ENCODE measurements at regions of chr17 and their contacts with region 1.

Region 1: GRCh38 chr17:59311130-59311920 is 20.1 kb upstream of the YPEL2 start:
- DNase-seq: no peak
- ATAC-seq: peak; percentile 94 to 95

Region 2: DNA sequence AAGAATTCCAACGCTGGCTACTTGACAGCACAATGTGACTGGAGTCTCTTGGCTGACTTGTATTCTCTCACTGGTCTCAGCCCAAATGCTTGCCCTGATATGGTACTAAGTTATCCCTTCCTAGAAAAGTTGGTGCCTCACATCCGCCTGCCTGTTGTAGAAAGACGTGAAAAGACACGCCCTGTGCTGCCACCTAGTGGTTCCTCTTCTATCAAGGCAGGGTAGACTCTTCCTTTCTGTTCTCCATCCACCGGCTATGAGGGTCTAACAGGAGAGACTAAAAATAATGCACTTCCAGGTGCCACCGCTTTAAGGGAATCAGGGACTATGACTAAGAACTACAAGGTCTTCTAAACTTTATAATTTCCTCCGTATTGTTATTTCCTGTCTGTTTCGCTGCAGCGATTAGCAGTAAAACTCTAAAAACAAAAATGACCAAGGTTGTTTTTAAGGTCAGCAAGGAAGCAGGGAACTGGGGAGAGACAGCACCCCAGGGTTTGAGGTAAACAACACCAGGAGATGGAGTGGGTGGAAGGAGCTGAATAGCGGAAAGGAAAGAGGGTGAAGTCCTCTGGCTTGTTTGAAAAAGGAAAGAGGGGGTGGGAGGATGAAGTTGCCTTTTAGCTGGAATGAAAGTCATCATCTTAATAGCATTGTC is 129.6 kb after region 1 on chr17:
- intact Hi-C with region 1: loop called (anchors 1 to 5 kb)
- DNase-seq: peak; percentile 94
- ATAC-seq: peak; percentile 91 to 93

Region 3: GRCh38 chr17:59490216-59490615 is 178.9 kb after region 1 on chr17:
- intact Hi-C with region 1: no loop called
- DNase-seq: no peak
- ATAC-seq: peak in 1 of 2 donors; percentile 44

Region 4: DNA sequence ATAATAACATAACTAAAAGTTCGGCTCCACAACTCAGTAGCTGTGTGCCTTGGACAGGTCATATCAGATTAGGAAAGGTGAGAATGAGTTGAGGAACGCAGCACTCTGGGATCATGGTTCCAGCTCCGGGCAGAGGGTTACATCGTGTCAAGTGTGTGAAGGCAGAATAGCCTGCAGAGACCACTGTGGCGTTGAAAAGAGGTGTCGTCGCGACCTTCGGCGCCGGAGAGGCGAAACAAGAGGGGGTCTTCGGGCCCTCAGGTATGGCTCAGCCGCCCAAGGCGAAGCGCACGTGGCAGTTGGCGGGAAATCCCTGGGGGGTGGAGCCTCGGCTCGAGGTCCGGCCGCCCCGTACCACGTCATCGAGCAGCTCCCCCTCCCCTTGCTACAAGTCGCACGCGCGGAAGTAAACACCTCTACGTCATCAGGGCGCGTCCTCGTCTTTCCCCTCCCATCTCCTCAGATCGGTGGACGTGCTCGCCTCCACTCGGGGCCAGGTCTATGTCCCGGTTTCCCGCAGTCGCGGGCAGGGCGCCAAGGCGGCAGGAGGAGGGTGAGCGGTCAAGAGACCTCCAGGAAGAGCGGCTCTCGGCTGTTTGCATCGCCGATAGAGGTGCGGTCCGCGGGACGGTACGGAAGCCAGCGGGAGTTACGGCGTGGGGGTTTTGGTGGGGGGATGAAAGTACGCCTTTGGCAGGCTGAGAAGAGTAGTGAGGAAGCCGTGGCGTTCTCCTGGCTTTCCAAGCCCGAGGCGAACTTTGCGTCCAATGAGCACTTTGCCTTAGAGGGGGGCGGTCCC is 254.0 kb after region 1 on chr17 and contains the start of gene DHX40:
- intact Hi-C with region 1: loop called in 1 of 2 experiments (anchors 10 kb)
- DNase-seq: peak; percentile 97
- ATAC-seq: peak; percentile 99
- total RNA-seq, gene DHX40: 15.0 to 16.5 TPM